ENCODE measurements at regions of chr3 and their contacts with region 1.

Region 1: DNA sequence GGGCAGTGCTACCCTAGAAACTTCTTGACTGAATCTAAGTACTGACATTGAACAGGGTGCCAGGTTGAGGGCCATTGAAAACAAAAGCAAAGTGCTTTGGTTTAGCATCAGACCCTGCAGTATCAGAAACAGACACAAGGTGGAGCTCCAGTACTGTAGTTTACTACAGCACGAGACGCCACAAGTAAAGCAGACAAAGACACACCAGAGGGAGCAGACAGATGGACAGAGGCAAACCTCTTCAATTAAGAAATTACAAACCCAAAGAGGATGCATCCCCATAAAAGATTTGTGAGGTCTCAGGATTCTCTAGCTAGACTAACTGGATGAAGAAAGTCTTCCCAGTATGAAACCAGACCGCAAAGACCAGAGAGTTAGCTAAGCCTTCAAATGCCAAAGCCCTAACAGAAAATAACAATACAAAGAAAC is 16.6 kb downstream of the TOP2B start:
- DNase-seq: peak; percentile 59
- CTCF ChIP-seq: peak; percentile 77

Region 2: GRCh38 chr3:25658836-25659235 is 10.7 kb after region 1 on chr3:
- CTCF ChIA-PET with region 1: interaction called, 22 read pairs
- POLR2A ChIA-PET with region 1: no interaction called
- DNase-seq: no peak
- CTCF ChIP-seq: no peak

Region 3: GRCh38 chr3:25678581-25678980 is 30.5 kb after region 1 on chr3:
- CTCF ChIA-PET with region 1: interaction called, 16 read pairs
- POLR2A ChIA-PET with region 1: no interaction called
- DNase-seq: no peak
- CTCF ChIP-seq: no peak

Region 4: DNA sequence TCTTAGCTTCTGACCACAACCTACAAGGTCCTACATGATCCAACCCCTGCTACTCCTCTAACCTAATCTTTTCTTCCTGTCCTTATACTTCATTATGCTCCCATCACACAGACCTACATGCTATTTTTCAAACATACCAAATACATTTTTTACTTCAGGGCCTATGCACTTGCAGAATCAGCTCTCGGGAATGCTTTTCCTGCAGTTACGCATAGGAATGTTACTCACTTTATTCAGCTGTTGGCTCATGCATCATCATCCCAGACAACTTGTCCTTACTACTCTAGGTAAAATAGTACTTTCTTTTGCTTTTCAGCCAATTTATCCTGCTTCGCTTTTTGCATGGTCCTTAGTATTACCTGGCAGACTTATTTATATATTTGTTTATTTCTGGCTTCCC is 247.3 kb after region 1 on chr3:
- CTCF ChIA-PET with region 1: interaction called, 10 read pairs
- POLR2A ChIA-PET with region 1: no interaction called
- DNase-seq: no peak
- CTCF ChIP-seq: no peak

Region 5: GRCh38 chr3:26118165-26118564 is 470.0 kb after region 1 on chr3:
- CTCF ChIA-PET with region 1: interaction called, 21 read pairs
- POLR2A ChIA-PET with region 1: no interaction called
- DNase-seq: peak; percentile 10
- CTCF ChIP-seq: peak; percentile 46

Measured in GM10248 (cell line).